ENCODE measurements at regions of chr2 and their contacts with region 1.

Region 1: GRCh38 chr2:30645081-30645747 is 162.0 kb downstream of the CAPN13 start:
- DNase-seq: no peak
- ATAC-seq: no peak
- H3K4me3 ChIP-seq: no peak overlapping the region
- H3K27ac ChIP-seq: no peak overlapping the region
- H3K4me1 ChIP-seq: no peaks in the 10 kb centered on the region
- H3K27me3 ChIP-seq: peaks cover 0 to 15% of the 10 kb centered on the region in 2 experiments; a peak in 2 of 5 replicates
- CTCF ChIP-seq: no peak
- EP300 ChIP-seq: no peak
- POLR2A ChIP-seq: no peak
- RAD21 ChIP-seq: no peak

Region 2: GRCh38 chr2:30662268-30663131 is 17.3 kb after region 1 on chr2:
- CTCF ChIA-PET with region 1: no interaction called
- POLR2A ChIA-PET with region 1: interaction called, 11 read pairs
- in situ Hi-C with region 1: no loop called
- intact Hi-C with region 1: no loop called
- DNase-seq: no peak
- ATAC-seq: no peak
- H3K4me3 ChIP-seq: no peak overlapping the region
- H3K27ac ChIP-seq: no peak overlapping the region
- H3K4me1 ChIP-seq: peaks cover 0 to 4% of the 10 kb centered on the region in 2 experiments; a peak in 2 of 5 replicates
- H3K27me3 ChIP-seq: no peaks in the 10 kb centered on the region; a peak in 1 of 5 replicates
- CTCF ChIP-seq: no peak
- EP300 ChIP-seq: no peak
- POLR2A ChIP-seq: no peak
- RAD21 ChIP-seq: no peak

Region 3: GRCh38 chr2:30877833-30878232 is 232.6 kb after region 1 on chr2:
- CTCF ChIA-PET with region 1: no interaction called
- POLR2A ChIA-PET with region 1: no interaction called
- in situ Hi-C with region 1: no loop called
- intact Hi-C with region 1: no loop called
- DNase-seq: no peak
- ATAC-seq: no peak
- H3K4me3 ChIP-seq: no peak overlapping the region
- H3K27ac ChIP-seq: no peak overlapping the region
- H3K4me1 ChIP-seq: no peaks in the 10 kb centered on the region
- H3K27me3 ChIP-seq: peaks cover 0 to 5% of the 10 kb centered on the region in 2 experiments; a peak in 2 of 5 replicates
- CTCF ChIP-seq: no peak
- EP300 ChIP-seq: no peak
- POLR2A ChIP-seq: no peak
- RAD21 ChIP-seq: no peak

Region 4: GRCh38 chr2:31079665-31080064 is 434.5 kb after region 1 on chr2:
- CTCF ChIA-PET with region 1: no interaction called
- POLR2A ChIA-PET with region 1: no interaction called
- in situ Hi-C with region 1: no loop called
- intact Hi-C with region 1: no loop called
- DNase-seq: peak; percentile 24 to 55 (median 37)
- ATAC-seq: peak; percentile 86
- H3K4me3 ChIP-seq: no peak overlapping the region
- H3K27ac ChIP-seq: no peak overlapping the region
- H3K4me1 ChIP-seq: no peaks in the 10 kb centered on the region
- H3K27me3 ChIP-seq: peaks cover 3 to 15% of the 10 kb centered on the region in 2 experiments; a peak in 3 of 5 replicates
- CTCF ChIP-seq: peak; percentile 36 to 64 (median 49)
- EP300 ChIP-seq: no peak
- POLR2A ChIP-seq: no peak
- RAD21 ChIP-seq: peak in 1 of 2 experiments; percentile 14; a peak in 1 of 4 replicates